Right lobe of liver (tissue), 6 donors: ENCODE measurements at regions of chr4 and their contacts with region 1.

Region 1: GRCh38 chr4:110310795-110311194 is 112.4 kb upstream of the ELOVL6 start:
- DNase-seq: no peak
- ATAC-seq: no peak
- H3K4me3 ChIP-seq: no peak overlapping the region
- H3K27ac ChIP-seq: no peak overlapping the region
- H3K4me1 ChIP-seq: peaks cover 0 to 4% (median 0%) of the 10 kb centered on the region in 4 donors
- H3K27me3 ChIP-seq: no peaks in the 10 kb centered on the region
- CTCF ChIP-seq: no peak
- POLR2A ChIP-seq: no peak

Region 2: DNA sequence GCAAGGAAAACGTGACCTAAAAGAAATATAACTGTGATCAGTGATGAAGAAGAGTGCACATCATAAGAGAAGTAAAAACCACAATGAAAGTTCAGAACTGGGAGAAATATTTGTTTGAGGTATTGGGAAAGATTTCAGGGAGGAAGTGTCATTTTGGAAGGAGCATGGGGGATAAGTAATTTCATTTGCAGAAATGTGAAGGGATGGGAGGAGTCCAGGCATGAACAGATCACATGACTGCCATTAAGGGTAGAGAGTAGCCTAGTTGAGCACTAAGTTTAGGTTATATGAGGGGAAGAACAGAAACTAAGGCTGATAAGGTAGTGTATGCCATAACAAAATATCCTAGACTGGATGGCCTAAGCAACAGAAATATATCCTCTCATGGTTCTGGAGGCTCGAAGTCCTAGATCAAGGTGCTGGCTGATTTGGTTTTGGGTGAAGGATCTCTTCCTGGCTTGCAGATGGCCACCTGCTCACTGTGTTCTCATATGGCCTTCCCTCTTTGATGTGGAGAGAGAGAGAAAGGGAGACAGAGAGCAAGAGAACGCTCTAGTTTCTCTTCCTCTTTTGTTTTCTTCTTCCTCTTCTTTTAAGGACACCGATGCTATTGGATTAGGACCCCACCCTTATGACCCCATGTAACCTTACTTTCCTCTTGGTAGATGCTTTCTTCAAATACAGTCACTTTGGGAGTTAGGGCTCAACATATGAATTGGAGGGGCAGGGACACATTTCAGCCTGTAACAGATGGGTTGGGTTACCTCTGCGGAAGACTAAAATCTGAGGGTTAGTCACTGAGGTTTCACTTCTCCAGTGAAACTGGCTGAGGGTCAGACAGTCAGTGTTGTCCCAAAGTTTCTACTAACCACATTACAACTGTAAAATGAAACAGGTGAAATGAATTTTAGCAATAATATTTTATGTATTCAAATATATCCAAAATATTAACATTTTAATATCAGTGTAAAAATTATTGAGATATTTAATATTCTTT is 320.2 kb before region 1 on chr4:
- intact Hi-C with region 1: no loop called
- DNase-seq: no peak
- ATAC-seq: peak in 1 of 4 donors; percentile 45
- H3K4me3 ChIP-seq: no peak overlapping the region
- H3K27ac ChIP-seq: no peak overlapping the region
- H3K4me1 ChIP-seq: peaks cover 0 to 2% (median 0%) of the 10 kb centered on the region in 4 donors
- H3K27me3 ChIP-seq: no peaks in the 10 kb centered on the region
- CTCF ChIP-seq: no peak
- POLR2A ChIP-seq: no peak

Region 3: DNA sequence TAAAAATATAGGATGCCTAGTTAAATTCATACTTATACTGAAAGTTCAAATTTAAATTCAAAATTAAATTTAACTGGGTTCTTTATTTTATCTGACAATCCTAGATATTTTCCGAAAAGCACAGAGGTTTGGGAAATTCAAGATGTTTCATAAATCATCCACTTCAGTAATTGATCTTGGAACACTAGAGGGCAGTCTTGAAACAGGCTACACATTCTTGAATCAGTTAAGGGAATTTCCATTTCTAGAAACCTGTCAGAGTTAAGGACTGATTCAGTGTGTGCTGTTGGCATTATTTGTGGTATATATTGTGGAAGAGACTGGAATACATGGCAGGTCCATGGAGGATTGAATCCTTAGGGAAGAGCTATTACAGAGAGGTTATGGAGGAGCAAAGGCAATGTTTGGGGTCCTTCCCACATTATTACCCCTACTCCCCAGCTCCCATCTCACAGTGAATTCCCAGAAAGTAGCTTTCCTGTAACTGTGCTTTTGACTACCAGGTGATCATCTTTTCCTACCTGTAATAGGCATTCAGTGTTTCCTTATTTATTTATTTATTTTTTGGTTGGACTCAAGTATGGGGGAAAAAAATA is 305.2 kb before region 1 on chr4:
- intact Hi-C with region 1: loop called in 1 of 2 experiments (anchors 10 kb)
- DNase-seq: no peak
- ATAC-seq: peak; percentile 54 to 79 (median 66)
- H3K4me3 ChIP-seq: no peak overlapping the region
- H3K27ac ChIP-seq: peak overlapping the region in 2 of 3 donors; percentile 18 to 72
- H3K4me1 ChIP-seq: peaks cover 0 to 46% (median 18%) of the 10 kb centered on the region in 4 donors
- H3K27me3 ChIP-seq: no peaks in the 10 kb centered on the region
- CTCF ChIP-seq: peak; percentile 70 to 78 (median 76)
- POLR2A ChIP-seq: no peak

Region 4: DNA sequence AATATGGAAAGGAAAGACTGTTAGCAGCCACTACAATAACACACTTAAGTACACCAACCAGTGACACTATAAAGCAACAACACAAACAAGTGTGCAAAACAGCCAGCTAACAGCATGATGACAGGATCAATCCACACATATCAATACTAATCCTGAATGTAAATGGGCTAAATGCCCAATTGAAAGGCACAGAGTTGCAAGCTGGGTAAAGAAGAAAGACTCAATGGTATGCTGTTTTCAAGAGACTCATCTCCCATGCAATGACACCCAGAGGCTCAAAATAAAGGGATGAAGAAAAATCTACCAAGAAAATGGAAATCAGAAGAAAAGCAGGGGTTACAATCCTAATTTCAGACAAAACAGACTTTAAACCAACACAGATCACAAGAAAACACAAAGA is 71.0 kb after region 1 on chr4:
- intact Hi-C with region 1: no loop called
- DNase-seq: no peak
- ATAC-seq: no peak
- H3K4me3 ChIP-seq: no peak overlapping the region
- H3K27ac ChIP-seq: no peak overlapping the region
- H3K4me1 ChIP-seq: no peaks in the 10 kb centered on the region
- H3K27me3 ChIP-seq: no peaks in the 10 kb centered on the region
- CTCF ChIP-seq: no peak
- POLR2A ChIP-seq: no peak

Region 5: GRCh38 chr4:110396973-110397372 is 86.2 kb after region 1 on chr4:
- intact Hi-C with region 1: no loop called
- DNase-seq: no peak
- ATAC-seq: no peak
- H3K4me3 ChIP-seq: no peak overlapping the region
- H3K27ac ChIP-seq: no peak overlapping the region
- H3K4me1 ChIP-seq: peaks cover 0 to 17% (median 4%) of the 10 kb centered on the region in 4 donors
- H3K27me3 ChIP-seq: no peaks in the 10 kb centered on the region
- CTCF ChIP-seq: no peak
- POLR2A ChIP-seq: no peak

Region 6: GRCh38 chr4:110508827-110509710 is 198.3 kb after region 1 on chr4:
- intact Hi-C with region 1: loop called in 1 of 2 experiments (anchors 5 kb)
- DNase-seq: no peak
- ATAC-seq: peak; percentile 61 to 77 (median 74)
- H3K4me3 ChIP-seq: no peak overlapping the region
- H3K27ac ChIP-seq: no peak overlapping the region
- H3K4me1 ChIP-seq: no peaks in the 10 kb centered on the region
- H3K27me3 ChIP-seq: no peaks in the 10 kb centered on the region
- CTCF ChIP-seq: peak; percentile 44 to 47 (median 46)
- POLR2A ChIP-seq: no peak